HEK293T (cell line): ENCODE measurements at regions of chr5 and their contacts with region 1.

Region 1: GRCh38 chr5:147578228-147579024 is 68.6 kb upstream of the DPYSL3 start:
- DNase-seq: peak; percentile 31

Region 2: DNA sequence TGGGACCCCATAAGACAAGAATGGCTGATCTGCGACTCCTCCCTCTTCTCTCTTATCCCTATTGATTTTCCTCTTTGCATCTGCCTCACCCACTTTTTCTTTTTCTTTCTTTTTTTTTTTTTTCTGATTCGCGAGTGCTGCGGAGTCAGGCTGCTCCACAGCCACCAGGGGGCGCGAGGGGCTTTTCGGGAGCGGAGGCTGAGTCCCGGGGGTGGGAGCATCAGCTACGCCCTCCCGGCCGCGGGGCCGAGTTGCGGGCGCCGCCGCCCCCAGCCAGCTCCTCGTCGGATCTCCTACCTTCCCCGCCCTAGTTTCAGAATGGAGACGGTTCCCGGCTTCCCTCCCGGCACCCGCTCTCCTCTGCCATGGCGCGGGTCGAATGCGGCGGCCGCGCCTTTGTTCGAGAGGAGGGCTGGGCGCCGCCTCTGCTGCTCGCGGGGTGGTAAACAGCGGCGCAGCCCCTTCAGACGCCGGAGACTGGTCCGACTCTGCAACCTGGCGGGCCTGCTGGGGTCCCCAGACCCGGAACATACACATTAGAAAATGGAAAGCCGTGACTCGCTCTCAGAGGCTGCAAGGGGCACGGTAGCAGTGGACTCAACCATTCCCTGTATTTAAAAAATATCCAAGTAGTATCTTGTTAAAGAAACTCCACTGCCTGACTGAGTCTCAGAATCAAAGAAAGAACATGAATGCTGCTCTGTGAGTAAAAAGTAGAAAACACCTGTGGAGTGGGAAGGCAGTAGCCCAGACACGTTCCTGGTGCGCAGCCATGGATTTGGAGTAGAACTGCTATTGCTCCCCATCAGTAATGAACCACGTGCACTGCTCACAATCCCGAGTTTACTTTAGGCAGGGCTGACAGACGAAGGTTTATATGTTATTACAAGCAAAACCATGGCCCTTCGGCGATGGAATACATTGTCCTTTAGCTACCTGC is 124.3 kb before region 1 on chr5:
- CTCF ChIA-PET with region 1: interaction called, 13 read pairs
- POLR2A ChIA-PET with region 1: interaction called, 4 read pairs
- DNase-seq: peak; percentile 80

Region 3: DNA sequence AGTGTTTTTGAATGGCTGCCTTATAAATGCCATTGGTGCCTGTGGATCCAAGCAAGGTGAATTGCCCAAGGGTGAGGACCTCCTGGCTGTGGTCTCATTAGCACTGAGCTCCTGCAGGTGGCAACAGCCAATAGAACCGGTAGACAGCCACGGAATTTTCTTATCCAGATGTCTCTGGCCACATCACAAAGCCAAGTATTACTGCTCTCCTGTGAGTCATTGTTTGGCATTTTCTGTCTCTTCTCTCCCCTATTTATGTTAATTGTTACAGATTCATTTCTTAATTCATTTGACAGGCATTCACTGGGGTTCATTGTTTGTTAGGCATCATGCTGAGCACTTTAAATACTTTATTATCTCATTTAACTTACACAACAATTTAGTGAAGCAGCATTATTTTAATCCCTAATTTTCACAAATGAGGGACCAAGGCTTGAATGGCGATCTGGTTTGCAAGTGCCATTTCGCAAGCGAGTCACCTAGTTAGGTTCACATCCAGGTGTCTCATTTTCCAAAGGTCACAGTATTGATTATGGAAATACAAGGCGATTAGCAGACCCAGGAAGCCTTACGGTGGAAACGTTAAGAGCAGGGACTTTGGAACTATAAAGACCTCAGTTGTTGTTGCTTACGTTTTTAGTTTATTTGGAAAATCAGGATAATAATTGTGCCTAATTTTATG is 10.4 kb before region 1 on chr5:
- CTCF ChIA-PET with region 1: no interaction called
- POLR2A ChIA-PET with region 1: no interaction called
- DNase-seq: no peak

Region 4: GRCh38 chr5:147796556-147797308 is 218.3 kb after region 1 on chr5:
- CTCF ChIA-PET with region 1: no interaction called
- POLR2A ChIA-PET with region 1: no interaction called
- DNase-seq: no peak